ENCODE measurements at regions of chr3 and their contacts with region 1.

Region 1: GRCh38 chr3:32934150-32934742 is 17.2 kb upstream of the CCR4 start:
- DNase-seq: no peak
- H3K4me3 ChIP-seq: no peak overlapping the region
- H3K27ac ChIP-seq: no peak overlapping the region
- H3K4me1 ChIP-seq: no peaks in the 10 kb centered on the region
- H3K27me3 ChIP-seq: no peaks in the 10 kb centered on the region
- CTCF ChIP-seq: peak in 8 of 11 experiments; percentile 4 to 65 (median 56)
- POLR2A ChIP-seq: no peak

Region 2: GRCh38 chr3:32510075-32510724 is 424.0 kb before region 1 on chr3:
- intact Hi-C with region 1: loop called (anchors 5 kb)
- DNase-seq: no peak
- H3K4me3 ChIP-seq: no peak overlapping the region
- H3K27ac ChIP-seq: no peak overlapping the region
- H3K4me1 ChIP-seq: peaks cover 0 to 6% (median 0%) of the 10 kb centered on the region in 6 donors
- H3K27me3 ChIP-seq: no peaks in the 10 kb centered on the region
- CTCF ChIP-seq: peak; percentile 48 to 85 (median 73)
- POLR2A ChIP-seq: no peak

Measured in spleen (tissue), 13 donors.